ENCODE measurements at regions of chr17 and their contacts with region 1.

Region 1: GRCh38 chr17:2029911-2030778 is at the start of gene DPH1:
- DNase-seq: peak; percentile 96
- H3K4me3 ChIP-seq: peak within 1 kb of the TSS; percentile 99 to 100
- H3K27ac ChIP-seq: peak within 1 kb of the TSS; percentile 56 to 64; a peak in 3 of 4 replicates
- H3K4me1 ChIP-seq: peaks cover 5 to 14% of the 10 kb centered on the region in 2 experiments; a peak in 2 of 4 replicates
- H3K27me3 ChIP-seq: peaks cover 7% of the 10 kb centered on the region; the same call in 1 of the 2 replicates
- CTCF ChIP-seq: no peak
- EP300 ChIP-seq: no peak
- RAD21 ChIP-seq: no peak; the same call in 1 of the 2 replicates
- polyA plus RNA-seq, gene DPH1: 36.2 and 39.5 TPM in 2 replicates

Region 2: GRCh38 chr17:1882836-1883235 is 147.3 kb before region 1 on chr17:
- CTCF ChIA-PET with region 1: interaction called, 38 read pairs
- POLR2A ChIA-PET with region 1: no interaction called
- DNase-seq: peak; percentile 49
- H3K4me3 ChIP-seq: no peak overlapping the region; a peak in 1 of 4 replicates
- H3K27ac ChIP-seq: no peak overlapping the region
- H3K4me1 ChIP-seq: no peaks in the 10 kb centered on the region
- H3K27me3 ChIP-seq: no peaks in the 10 kb centered on the region
- CTCF ChIP-seq: peak; percentile 57
- EP300 ChIP-seq: no peak
- RAD21 ChIP-seq: peak; percentile 66

Region 3: DNA sequence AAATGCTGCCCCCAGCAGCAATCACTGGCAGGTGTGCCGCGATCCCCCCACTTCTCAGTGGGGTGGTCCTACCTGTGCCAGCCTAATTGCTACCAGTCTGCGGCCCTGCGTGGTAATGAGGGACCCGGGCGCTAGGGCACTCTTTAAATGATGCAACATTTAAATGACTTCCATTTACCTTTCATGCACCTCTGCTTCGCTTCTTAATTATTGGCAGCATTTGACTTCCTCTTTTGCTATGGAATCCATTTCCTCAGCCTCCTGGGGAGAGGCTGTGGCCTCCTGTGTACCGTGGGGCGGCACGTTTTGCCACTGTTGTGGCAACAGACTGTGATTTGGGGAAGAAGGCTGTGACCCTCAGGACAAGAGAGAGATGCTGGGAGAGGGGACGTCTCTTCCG is 114.3 kb before region 1 on chr17:
- CTCF ChIA-PET with region 1: interaction called, 197 read pairs
- POLR2A ChIA-PET with region 1: no interaction called
- DNase-seq: no peak
- H3K4me3 ChIP-seq: no peak overlapping the region
- H3K27ac ChIP-seq: no peak overlapping the region
- H3K4me1 ChIP-seq: no peaks in the 10 kb centered on the region
- H3K27me3 ChIP-seq: peaks cover 7% of the 10 kb centered on the region; the same call in 1 of the 2 replicates
- CTCF ChIP-seq: no peak
- EP300 ChIP-seq: no peak
- RAD21 ChIP-seq: no peak

Region 4: GRCh38 chr17:1928976-1929375 is 101.2 kb before region 1 on chr17:
- CTCF ChIA-PET with region 1: interaction called, 10 read pairs
- POLR2A ChIA-PET with region 1: no interaction called
- DNase-seq: no peak
- H3K4me3 ChIP-seq: no peak overlapping the region
- H3K27ac ChIP-seq: no peak overlapping the region
- H3K4me1 ChIP-seq: peaks cover 0 to 4% of the 10 kb centered on the region in 2 experiments; a peak in 1 of 4 replicates
- H3K27me3 ChIP-seq: no peaks in the 10 kb centered on the region
- CTCF ChIP-seq: no peak
- EP300 ChIP-seq: no peak
- RAD21 ChIP-seq: no peak

Region 5: GRCh38 chr17:1999557-2000251 is 30.4 kb before region 1 on chr17:
- CTCF ChIA-PET with region 1: interaction called, 23 read pairs
- POLR2A ChIA-PET with region 1: no interaction called
- DNase-seq: peak; percentile 51
- H3K4me3 ChIP-seq: no peak overlapping the region
- H3K27ac ChIP-seq: peak overlapping the region in 1 of 2 experiments; percentile 7; a peak in 1 of 4 replicates
- H3K4me1 ChIP-seq: peaks cover 0 to 37% of the 10 kb centered on the region in 2 experiments; a peak in 1 of 4 replicates
- H3K27me3 ChIP-seq: no peaks in the 10 kb centered on the region
- CTCF ChIP-seq: no peak
- EP300 ChIP-seq: 0 out of 4 replicates have a peak, but pooled peaks of 1 of the 2 experiments have one; percentile 2
- RAD21 ChIP-seq: no peak

Region 6: GRCh38 chr17:2041561-2042366 is 11.6 kb after region 1 on chr17 and contains the start of gene OVCA2:
- CTCF ChIA-PET with region 1: interaction called, 18 read pairs
- POLR2A ChIA-PET with region 1: interaction called, 4 read pairs
- DNase-seq: peak; percentile 97
- H3K4me3 ChIP-seq: peak within 1 kb of the TSS; percentile 71 to 81
- H3K27ac ChIP-seq: peak within 1 kb of the TSS; percentile 79 to 92
- H3K4me1 ChIP-seq: peaks cover 20 to 21% of the 10 kb centered on the region in 2 experiments; a peak in 3 of 4 replicates
- H3K27me3 ChIP-seq: no peaks in the 10 kb centered on the region
- CTCF ChIP-seq: peak; percentile 26; the same call in 1 of the 2 replicates
- EP300 ChIP-seq: no peak
- RAD21 ChIP-seq: peak; percentile 49
- polyA plus RNA-seq, gene OVCA2: 58.1 and 59.2 TPM in 2 replicates

Region 7: DNA sequence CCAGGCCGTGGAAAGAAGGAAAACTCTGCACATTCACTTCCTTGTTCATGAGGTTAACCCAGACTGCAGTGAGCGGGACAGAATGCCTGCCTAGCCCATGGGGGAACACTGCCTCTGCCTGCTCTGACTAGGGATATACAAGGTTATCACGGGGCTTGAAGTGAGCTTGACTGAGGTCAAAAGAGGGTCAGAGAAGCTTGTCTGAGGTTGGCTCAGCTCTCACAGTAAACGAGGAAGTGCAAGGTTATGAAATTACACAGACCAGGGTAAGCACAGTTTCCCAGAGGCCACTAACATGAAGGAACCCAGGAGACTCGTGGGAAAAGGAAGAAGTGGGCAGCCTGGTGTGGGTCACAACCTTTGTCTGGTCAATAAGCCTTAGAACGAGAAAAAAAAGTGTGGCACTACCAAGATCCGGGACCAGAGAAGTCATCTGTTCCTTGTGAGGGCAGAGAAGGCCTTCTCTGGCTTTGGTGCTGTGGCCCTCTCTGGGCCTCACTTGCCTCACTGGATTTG is 53.5 kb after region 1 on chr17:
- CTCF ChIA-PET with region 1: no interaction called
- POLR2A ChIA-PET with region 1: no interaction called
- DNase-seq: no peak
- H3K4me3 ChIP-seq: no peak overlapping the region
- H3K27ac ChIP-seq: peak overlapping the region in 1 of 2 experiments; percentile 89; a peak in 3 of 4 replicates
- H3K4me1 ChIP-seq: peaks cover 19 to 76% of the 10 kb centered on the region in 2 experiments
- H3K27me3 ChIP-seq: no peaks in the 10 kb centered on the region
- CTCF ChIP-seq: no peak
- EP300 ChIP-seq: no peak
- RAD21 ChIP-seq: no peak

Region 8: GRCh38 chr17:2172077-2172851 is 142.1 kb after region 1 on chr17:
- CTCF ChIA-PET with region 1: no interaction called
- POLR2A ChIA-PET with region 1: no interaction called
- DNase-seq: no peak
- H3K4me3 ChIP-seq: peak overlapping the region in 1 of 2 experiments; percentile 17; a peak in 2 of 4 replicates
- H3K27ac ChIP-seq: peak overlapping the region; percentile 91 to 98
- H3K4me1 ChIP-seq: peaks cover 38 to 54% of the 10 kb centered on the region in 2 experiments
- H3K27me3 ChIP-seq: no peaks in the 10 kb centered on the region
- CTCF ChIP-seq: no peak
- EP300 ChIP-seq: peak; percentile 21 to 57; a peak in 2 of 4 replicates
- RAD21 ChIP-seq: no peak

Measured in SK-N-SH (cell line).